ENCODE measurements at regions of chr18 and their contacts with region 1.

Region 1: DNA sequence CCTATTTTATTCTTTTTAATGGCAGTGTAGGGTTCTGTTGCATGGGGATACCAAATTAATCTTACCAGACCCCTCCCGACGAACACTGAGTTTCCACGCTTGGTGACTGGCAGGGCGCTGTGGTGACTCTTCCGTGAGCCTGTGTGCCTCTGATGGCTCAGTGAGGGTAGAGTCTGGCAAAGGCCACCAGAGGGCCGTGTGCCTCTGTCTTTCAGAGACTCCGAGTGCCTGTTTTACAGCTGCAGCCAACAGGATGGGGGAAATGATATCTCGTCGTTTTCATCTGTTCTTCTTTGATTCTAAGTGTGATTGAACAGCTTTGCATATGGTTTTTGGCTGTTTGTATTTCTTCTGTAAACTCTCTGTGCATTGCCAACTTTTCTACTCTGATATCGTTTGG is 99.8 kb downstream of the ZNF236 start:
- DNase-seq: peak; percentile 31 to 75 (median 46)
- ATAC-seq: peak; percentile 99
- H3K4me3 ChIP-seq: no peak overlapping the region
- H3K4me3 Mint-ChIP-seq: no peak overlapping the region
- H3K27ac ChIP-seq: no peak overlapping the region
- H3K27ac Mint-ChIP-seq: peak overlapping the region; percentile 1
- H3K4me1 ChIP-seq: peaks cover 3% of the 10 kb centered on the region
- H3K4me1 Mint-ChIP-seq: peaks cover 22% of the 10 kb centered on the region
- H3K27me3 ChIP-seq: no peaks in the 10 kb centered on the region
- H3K27me3 Mint-ChIP-seq: no peaks in the 10 kb centered on the region
- CTCF ChIP-seq: peak; percentile 68

Region 2: GRCh38 chr18:76374330-76375281 is 547.5 kb before region 1 on chr18:
- CTCF ChIA-PET with region 1: no interaction called
- POLR2A ChIA-PET with region 1: no interaction called
- intact Hi-C with region 1: no loop called
- DNase-seq: peak in 10 of 14 experiments; percentile 10 to 67 (median 34)
- ATAC-seq: peak; percentile 66
- H3K4me3 ChIP-seq: no peak overlapping the region
- H3K4me3 Mint-ChIP-seq: peak overlapping the region; percentile 70
- H3K27ac ChIP-seq: no peak overlapping the region
- H3K27ac Mint-ChIP-seq: peak overlapping the region; percentile 89
- H3K4me1 ChIP-seq: peaks cover 35% of the 10 kb centered on the region
- H3K4me1 Mint-ChIP-seq: peaks cover 49% of the 10 kb centered on the region
- H3K27me3 ChIP-seq: no peaks in the 10 kb centered on the region
- H3K27me3 Mint-ChIP-seq: no peaks in the 10 kb centered on the region
- CTCF ChIP-seq: no peak

Region 3: GRCh38 chr18:76963936-76964335 is 41.8 kb after region 1 on chr18:
- CTCF ChIA-PET with region 1: no interaction called
- POLR2A ChIA-PET with region 1: no interaction called
- intact Hi-C with region 1: no loop called
- DNase-seq: peak in 1 of 14 experiments; percentile 41
- ATAC-seq: no peak
- H3K4me3 ChIP-seq: no peak overlapping the region
- H3K4me3 Mint-ChIP-seq: no peak overlapping the region
- H3K27ac ChIP-seq: no peak overlapping the region
- H3K27ac Mint-ChIP-seq: peak overlapping the region; percentile 19
- H3K4me1 ChIP-seq: no peaks in the 10 kb centered on the region
- H3K4me1 Mint-ChIP-seq: peaks cover 36% of the 10 kb centered on the region
- H3K27me3 ChIP-seq: no peaks in the 10 kb centered on the region
- H3K27me3 Mint-ChIP-seq: no peaks in the 10 kb centered on the region
- CTCF ChIP-seq: no peak

Region 4: DNA sequence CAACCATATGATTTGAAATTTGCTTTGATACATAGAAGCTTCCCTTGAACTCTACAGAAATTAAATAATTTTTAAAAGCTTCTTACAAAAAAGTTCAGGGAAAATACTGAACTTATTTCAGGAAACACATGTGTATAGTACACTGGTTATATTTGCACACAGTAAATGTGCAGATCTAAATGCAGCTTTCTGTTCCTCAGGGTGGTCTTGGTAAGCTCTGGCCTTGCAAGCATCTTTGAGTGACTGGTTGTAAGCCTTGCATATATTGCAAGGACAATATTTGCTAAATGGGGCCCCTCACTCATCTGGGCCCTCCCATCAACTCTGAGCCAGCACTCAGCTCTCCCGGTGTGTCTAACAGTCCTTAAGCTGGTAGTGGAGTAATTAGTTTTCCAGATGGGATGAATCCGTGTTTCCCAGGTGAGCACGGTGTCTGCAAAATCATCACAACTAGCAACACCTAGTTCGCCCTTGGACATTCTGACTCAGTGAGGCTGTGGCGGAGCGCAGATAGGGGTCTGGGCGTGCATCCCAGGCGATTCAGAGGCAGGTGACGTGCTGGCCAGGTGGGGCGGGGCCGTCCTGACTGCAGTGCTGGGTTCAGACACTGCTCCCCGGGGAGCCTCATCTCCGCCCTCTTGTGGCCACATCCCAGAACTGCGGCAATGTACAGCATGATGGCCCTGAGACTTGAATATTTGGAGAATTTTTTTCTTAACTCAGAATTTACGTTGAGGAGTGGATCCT is 60.9 kb after region 1 on chr18:
- CTCF ChIA-PET with region 1: no interaction called
- POLR2A ChIA-PET with region 1: no interaction called
- intact Hi-C with region 1: loop called (anchors 2 kb)
- DNase-seq: peak; percentile 67 to 90 (median 82)
- ATAC-seq: peak; percentile 99
- H3K4me3 ChIP-seq: no peak overlapping the region
- H3K4me3 Mint-ChIP-seq: no peak overlapping the region
- H3K27ac ChIP-seq: no peak overlapping the region
- H3K27ac Mint-ChIP-seq: no peak overlapping the region
- H3K4me1 ChIP-seq: peaks cover 9% of the 10 kb centered on the region
- H3K4me1 Mint-ChIP-seq: no peaks in the 10 kb centered on the region
- H3K27me3 ChIP-seq: no peaks in the 10 kb centered on the region
- H3K27me3 Mint-ChIP-seq: no peaks in the 10 kb centered on the region
- CTCF ChIP-seq: peak; percentile 94

Region 5: GRCh38 chr18:77650799-77651385 is 728.8 kb after region 1 on chr18:
- CTCF ChIA-PET with region 1: interaction called, 3 read pairs
- POLR2A ChIA-PET with region 1: no interaction called
- intact Hi-C with region 1: loop called (anchors 2 to 10 kb)
- DNase-seq: peak in 13 of 14 experiments; percentile 15 to 66 (median 36)
- ATAC-seq: peak; percentile 44
- H3K4me3 ChIP-seq: no peak overlapping the region
- H3K4me3 Mint-ChIP-seq: no peak overlapping the region
- H3K27ac ChIP-seq: no peak overlapping the region
- H3K27ac Mint-ChIP-seq: no peak overlapping the region
- H3K4me1 ChIP-seq: peaks cover 5% of the 10 kb centered on the region
- H3K4me1 Mint-ChIP-seq: no peaks in the 10 kb centered on the region
- H3K27me3 ChIP-seq: peaks cover 6 to 14% of the 10 kb centered on the region in 2 experiments
- H3K27me3 Mint-ChIP-seq: peaks cover 24% of the 10 kb centered on the region
- CTCF ChIP-seq: peak; percentile 52

Measured in CD4-positive, alpha-beta T cell (primary cell).